Prostate gland (tissue), 2 donors: ENCODE measurements at regions of chr16 and their contacts with region 1.

Region 1: GRCh38 chr16:6009151-6009550 is 911.6 kb upstream of the EEF2KMT start:
- DNase-seq: no peak
- H3K4me3 ChIP-seq: no peak overlapping the region
- H3K27ac ChIP-seq: no peak overlapping the region
- H3K4me1 ChIP-seq: no peaks in the 10 kb centered on the region
- H3K27me3 ChIP-seq: no peaks in the 10 kb centered on the region
- CTCF ChIP-seq: no peak
- POLR2A ChIP-seq: no peak

Region 2: DNA sequence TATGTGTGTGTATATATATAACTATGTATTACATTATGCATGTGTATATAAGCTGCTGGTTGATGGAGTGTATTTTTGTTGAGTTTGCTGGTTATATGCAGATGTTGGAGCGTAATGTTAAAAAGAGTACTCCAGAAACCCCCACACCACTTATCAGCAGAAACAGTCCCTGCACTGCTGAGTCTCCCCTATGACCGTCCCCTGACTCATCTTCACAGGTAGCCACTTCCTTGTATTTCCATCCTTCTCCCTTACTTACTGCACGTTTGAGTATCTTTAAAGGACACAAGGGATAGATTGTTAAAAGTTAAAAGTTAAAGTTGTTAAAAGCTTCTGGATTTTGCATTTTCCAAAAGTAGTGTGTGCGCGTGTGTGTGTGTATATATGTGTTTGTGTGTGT is 57.7 kb before region 1 on chr16:
- intact Hi-C with region 1: no loop called
- DNase-seq: no peak
- H3K4me3 ChIP-seq: no peak overlapping the region
- H3K27ac ChIP-seq: no peak overlapping the region
- H3K4me1 ChIP-seq: no peaks in the 10 kb centered on the region
- H3K27me3 ChIP-seq: no peaks in the 10 kb centered on the region
- CTCF ChIP-seq: no peak
- POLR2A ChIP-seq: no peak

Region 3: GRCh38 chr16:6059671-6060070 is 50.5 kb after region 1 on chr16:
- intact Hi-C with region 1: loop called (anchors 5 kb)
- DNase-seq: no peak
- H3K4me3 ChIP-seq: no peak overlapping the region
- H3K27ac ChIP-seq: no peak overlapping the region
- H3K4me1 ChIP-seq: no peaks in the 10 kb centered on the region
- H3K27me3 ChIP-seq: no peaks in the 10 kb centered on the region
- CTCF ChIP-seq: no peak
- POLR2A ChIP-seq: no peak